Posterior cingulate gyrus (tissue), 11 donors: ENCODE measurements at regions of chr4 and their contacts with region 1.

Region 1: GRCh38 chr4:77240469-77241066 is 83.6 kb downstream of the CCNG2 start:
- DNase-seq: peak; percentile 34 to 95 (median 72)

Region 2: GRCh38 chr4:77157859-77158486 is 82.6 kb before region 1 on chr4:
- intact Hi-C with region 1: no loop called
- DNase-seq: peak; percentile 64 to 96 (median 76)

Region 3: GRCh38 chr4:77358315-77358928 is 117.9 kb after region 1 on chr4:
- intact Hi-C with region 1: loop called (anchors 1 kb)
- DNase-seq: peak in 1 of 10 donors; percentile 15

Region 4: GRCh38 chr4:77433418-77433733 is 192.8 kb after region 1 on chr4:
- intact Hi-C with region 1: loop called (anchors 5 kb)
- DNase-seq: no peak